MCF 10A (cell line): ENCODE measurements at regions of chr1 and their contacts with region 1.

Region 1: GRCh38 chr1:43763497-43763973 is 56.2 kb downstream of the ST3GAL3 start:
- DNase-seq: peak; percentile 91
- H3K4me3 Mint-ChIP-seq: no peak overlapping the region
- H3K27ac Mint-ChIP-seq: peak overlapping the region; percentile 57
- H3K4me1 Mint-ChIP-seq: peaks cover 12% of the 10 kb centered on the region
- H3K27me3 Mint-ChIP-seq: no peaks in the 10 kb centered on the region
- CTCF ChIP-seq: peak; percentile 85

Region 2: GRCh38 chr1:43227143-43227764 is 536.3 kb before region 1 on chr1:
- CTCF ChIA-PET with region 1: no interaction called
- POLR2A ChIA-PET with region 1: interaction called, 3 read pairs
- intact Hi-C with region 1: loop called (anchors 5 kb)
- DNase-seq: peak; percentile 80
- H3K4me3 Mint-ChIP-seq: no peak overlapping the region
- H3K27ac Mint-ChIP-seq: no peak overlapping the region
- H3K4me1 Mint-ChIP-seq: peaks cover 11% of the 10 kb centered on the region
- H3K27me3 Mint-ChIP-seq: no peaks in the 10 kb centered on the region
- CTCF ChIP-seq: peak; percentile 71

Region 3: DNA sequence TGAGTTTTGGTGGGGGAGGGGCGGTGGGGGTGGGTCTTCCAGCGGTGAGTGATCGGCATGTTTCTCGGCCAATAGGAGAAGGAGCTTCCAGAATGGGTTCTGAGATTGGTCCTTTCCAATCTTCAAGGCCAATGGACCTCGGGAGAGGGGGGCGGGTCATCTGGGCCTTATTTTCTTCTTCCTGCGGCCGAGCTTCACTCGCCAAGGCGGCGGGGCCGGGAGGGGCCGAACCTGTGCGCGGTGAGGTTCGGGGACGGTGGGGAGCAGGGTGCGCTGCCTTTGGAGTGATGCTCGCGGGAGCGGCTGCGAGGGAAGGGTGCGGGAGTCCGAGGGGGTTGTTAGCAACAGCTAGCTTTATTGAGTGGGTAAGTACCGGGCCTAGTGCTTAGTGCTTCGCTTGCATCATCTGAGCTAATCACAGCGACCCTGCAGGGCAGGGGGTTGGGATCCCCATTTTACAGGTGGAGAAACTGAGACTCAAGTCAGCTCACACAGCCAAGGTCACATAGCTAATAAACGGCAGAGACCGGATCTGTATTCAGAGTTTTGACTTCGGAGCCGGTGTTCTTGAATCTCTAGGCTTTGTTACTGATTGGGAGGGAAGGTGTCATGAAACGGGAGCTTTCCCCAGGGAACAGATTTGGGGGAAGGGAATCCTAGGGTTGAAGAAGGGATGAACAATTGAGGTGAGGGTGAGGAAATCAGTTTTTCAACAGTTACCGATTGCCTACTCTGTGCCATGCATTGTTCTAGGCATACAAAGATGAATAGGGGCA is 113.0 kb before region 1 on chr1:
- CTCF ChIA-PET with region 1: no interaction called
- POLR2A ChIA-PET with region 1: interaction called, 3 read pairs
- intact Hi-C with region 1: loop called (anchors 10 kb)
- DNase-seq: peak; percentile 98
- H3K4me3 Mint-ChIP-seq: peak overlapping the region; percentile 97
- H3K27ac Mint-ChIP-seq: peak overlapping the region; percentile 85
- H3K4me1 Mint-ChIP-seq: peaks cover 18% of the 10 kb centered on the region
- H3K27me3 Mint-ChIP-seq: no peaks in the 10 kb centered on the region
- CTCF ChIP-seq: no peak

Region 4: GRCh38 chr1:43912607-43913006 is 149.1 kb after region 1 on chr1:
- CTCF ChIA-PET with region 1: interaction called, 34 read pairs
- POLR2A ChIA-PET with region 1: interaction called, 5 read pairs
- intact Hi-C with region 1: no loop called
- DNase-seq: peak; percentile 69
- H3K4me3 Mint-ChIP-seq: no peak overlapping the region
- H3K27ac Mint-ChIP-seq: peak overlapping the region; percentile 68
- H3K4me1 Mint-ChIP-seq: peaks cover 24% of the 10 kb centered on the region
- H3K27me3 Mint-ChIP-seq: no peaks in the 10 kb centered on the region
- CTCF ChIP-seq: no peak

Region 5: GRCh38 chr1:43946236-43947060 is 182.9 kb after region 1 on chr1 and contains the start of gene IPO13:
- CTCF ChIA-PET with region 1: interaction called, 34 read pairs
- POLR2A ChIA-PET with region 1: interaction called, 10 read pairs
- intact Hi-C with region 1: loop called (anchors 1 kb)
- DNase-seq: peak; percentile 94
- H3K4me3 Mint-ChIP-seq: peak within 1 kb of the TSS; percentile 99
- H3K27ac Mint-ChIP-seq: peak within 1 kb of the TSS; percentile 99
- H3K4me1 Mint-ChIP-seq: peaks cover 30% of the 10 kb centered on the region
- H3K27me3 Mint-ChIP-seq: no peaks in the 10 kb centered on the region
- CTCF ChIP-seq: peak; percentile 56
- total RNA-seq, gene IPO13: 23.9 and 31.4 TPM in 2 replicates

Region 6: DNA sequence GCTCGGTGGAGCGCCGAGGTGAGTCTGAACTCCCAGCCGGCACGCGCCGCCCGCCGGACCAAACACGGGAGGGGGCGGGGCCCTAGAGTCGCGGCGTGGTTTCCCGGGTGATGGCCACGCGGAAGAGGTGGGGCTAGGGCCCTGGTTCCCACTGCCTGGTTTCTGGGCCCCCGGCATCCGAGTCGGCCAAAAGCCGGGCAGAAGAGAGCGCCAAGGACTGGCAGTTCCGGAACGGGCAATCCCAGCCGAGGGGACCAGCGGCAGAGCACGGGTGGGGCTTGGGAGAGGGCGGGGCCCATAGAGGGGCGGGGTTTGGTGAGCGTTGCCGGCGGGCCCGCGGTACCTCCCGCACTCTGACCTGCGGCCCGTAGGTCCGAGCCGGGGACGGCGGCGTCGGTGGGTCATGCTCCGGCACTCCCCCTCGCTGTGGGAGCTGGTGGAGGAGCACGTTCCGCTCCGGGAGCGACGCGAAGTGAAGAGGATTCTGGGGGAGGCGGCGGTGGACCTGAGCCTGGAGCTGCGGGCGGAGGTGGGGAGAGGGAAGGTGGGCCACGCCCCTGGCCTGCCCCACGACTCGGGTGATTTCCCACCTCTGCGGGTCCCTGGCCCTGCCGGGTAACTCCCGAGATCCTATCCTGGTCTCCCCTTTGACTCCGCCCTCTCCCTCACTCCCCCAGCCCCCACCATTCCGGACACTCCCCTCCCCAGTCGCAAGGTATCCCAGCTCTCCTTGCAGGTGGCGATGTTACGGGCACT is 228.1 kb after region 1 on chr1 and contains the start of gene CCDC24:
- CTCF ChIA-PET with region 1: interaction called, 13 read pairs
- POLR2A ChIA-PET with region 1: no interaction called
- intact Hi-C with region 1: no loop called
- DNase-seq: peak; percentile 86
- H3K4me3 Mint-ChIP-seq: peak within 1 kb of the TSS; percentile 89
- H3K27ac Mint-ChIP-seq: peak within 1 kb of the TSS; percentile 92
- H3K4me1 Mint-ChIP-seq: no peaks in the 10 kb centered on the region
- H3K27me3 Mint-ChIP-seq: no peaks in the 10 kb centered on the region
- CTCF ChIP-seq: no peak
- total RNA-seq, gene CCDC24: 3.6 and 4.8 TPM in 2 replicates

Region 7: GRCh38 chr1:44036409-44037139 is 273.0 kb after region 1 on chr1:
- CTCF ChIA-PET with region 1: interaction called, 21 read pairs
- POLR2A ChIA-PET with region 1: interaction called, 6 read pairs
- intact Hi-C with region 1: loop called (anchors 1 kb)
- DNase-seq: peak; percentile 85
- H3K4me3 Mint-ChIP-seq: no peak overlapping the region
- H3K27ac Mint-ChIP-seq: no peak overlapping the region
- H3K4me1 Mint-ChIP-seq: peaks cover 11% of the 10 kb centered on the region
- H3K27me3 Mint-ChIP-seq: no peaks in the 10 kb centered on the region
- CTCF ChIP-seq: peak; percentile 73